Thyroid gland (tissue), 4 donors: ENCODE measurements at regions of chr3 and their contacts with region 1.

Region 1: DNA sequence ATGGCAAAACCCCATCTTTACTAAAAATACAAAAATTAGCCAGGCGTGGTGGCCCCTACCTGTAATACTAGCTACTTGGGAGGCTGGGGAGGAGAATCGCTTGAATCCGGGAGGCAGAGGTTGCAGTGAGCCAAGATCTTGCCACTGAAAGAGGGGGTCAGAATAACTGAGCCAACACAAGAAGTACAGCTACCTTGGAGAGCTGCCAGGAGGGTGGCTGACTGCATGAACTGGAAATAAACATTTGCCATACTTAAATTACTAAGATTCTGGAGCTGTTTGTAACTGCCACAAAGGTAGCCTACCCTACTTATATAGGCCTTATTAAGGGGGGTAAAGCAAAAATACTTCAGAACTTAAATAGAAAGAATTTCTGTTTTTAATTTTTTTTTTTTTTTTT is 15.4 kb upstream of the PIK3CB start:
- DNase-seq: peak; percentile 66 to 75
- H3K4me3 ChIP-seq: no peak overlapping the region
- H3K27ac ChIP-seq: peak overlapping the region in 2 of 3 donors; percentile 56 to 61
- H3K4me1 ChIP-seq: peaks cover 22 to 28% of the 10 kb centered on the region in 2 donors
- H3K27me3 ChIP-seq: no peaks in the 10 kb centered on the region
- CTCF ChIP-seq: no peak
- POLR2A ChIP-seq: no peak

Region 2: GRCh38 chr3:138717348-138717747 is 132.8 kb before region 1 on chr3:
- intact Hi-C with region 1: no loop called
- DNase-seq: no peak
- H3K4me3 ChIP-seq: no peak overlapping the region
- H3K27ac ChIP-seq: no peak overlapping the region
- H3K4me1 ChIP-seq: no peaks in the 10 kb centered on the region
- H3K27me3 ChIP-seq: no peaks in the 10 kb centered on the region
- CTCF ChIP-seq: no peak
- POLR2A ChIP-seq: no peak

Region 3: DNA sequence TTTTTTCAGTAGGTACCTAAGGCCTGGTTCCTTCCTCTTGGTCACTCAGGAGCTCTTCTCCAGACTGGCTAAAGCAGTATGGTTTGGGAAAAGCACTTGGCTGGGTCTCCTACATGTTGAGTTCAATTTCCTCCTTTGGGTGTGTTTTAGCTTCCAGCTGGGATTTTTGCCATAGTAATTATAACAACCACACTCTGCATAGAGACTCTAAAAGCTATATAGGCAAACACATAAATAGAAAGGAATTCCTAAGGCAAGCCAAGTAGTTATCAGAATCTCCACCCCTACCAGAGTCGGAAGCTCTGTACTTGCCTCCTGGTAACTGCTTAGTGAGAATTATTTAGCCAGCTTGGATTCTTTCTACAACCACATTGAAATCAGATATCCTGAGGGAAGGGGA is 48.1 kb after region 1 on chr3:
- intact Hi-C with region 1: loop called (anchors 5 kb)
- DNase-seq: no peak
- H3K4me3 ChIP-seq: no peak overlapping the region
- H3K27ac ChIP-seq: peak overlapping the region; percentile 76 to 87 (median 83)
- H3K4me1 ChIP-seq: peaks cover 25 to 28% of the 10 kb centered on the region in 2 donors
- H3K27me3 ChIP-seq: no peaks in the 10 kb centered on the region
- CTCF ChIP-seq: no peak
- POLR2A ChIP-seq: no peak